Naive thymus-derived CD4-positive, alpha-beta T cell (primary cell): ENCODE measurements at regions of chr14 and their contacts with region 1.

Region 1: DNA sequence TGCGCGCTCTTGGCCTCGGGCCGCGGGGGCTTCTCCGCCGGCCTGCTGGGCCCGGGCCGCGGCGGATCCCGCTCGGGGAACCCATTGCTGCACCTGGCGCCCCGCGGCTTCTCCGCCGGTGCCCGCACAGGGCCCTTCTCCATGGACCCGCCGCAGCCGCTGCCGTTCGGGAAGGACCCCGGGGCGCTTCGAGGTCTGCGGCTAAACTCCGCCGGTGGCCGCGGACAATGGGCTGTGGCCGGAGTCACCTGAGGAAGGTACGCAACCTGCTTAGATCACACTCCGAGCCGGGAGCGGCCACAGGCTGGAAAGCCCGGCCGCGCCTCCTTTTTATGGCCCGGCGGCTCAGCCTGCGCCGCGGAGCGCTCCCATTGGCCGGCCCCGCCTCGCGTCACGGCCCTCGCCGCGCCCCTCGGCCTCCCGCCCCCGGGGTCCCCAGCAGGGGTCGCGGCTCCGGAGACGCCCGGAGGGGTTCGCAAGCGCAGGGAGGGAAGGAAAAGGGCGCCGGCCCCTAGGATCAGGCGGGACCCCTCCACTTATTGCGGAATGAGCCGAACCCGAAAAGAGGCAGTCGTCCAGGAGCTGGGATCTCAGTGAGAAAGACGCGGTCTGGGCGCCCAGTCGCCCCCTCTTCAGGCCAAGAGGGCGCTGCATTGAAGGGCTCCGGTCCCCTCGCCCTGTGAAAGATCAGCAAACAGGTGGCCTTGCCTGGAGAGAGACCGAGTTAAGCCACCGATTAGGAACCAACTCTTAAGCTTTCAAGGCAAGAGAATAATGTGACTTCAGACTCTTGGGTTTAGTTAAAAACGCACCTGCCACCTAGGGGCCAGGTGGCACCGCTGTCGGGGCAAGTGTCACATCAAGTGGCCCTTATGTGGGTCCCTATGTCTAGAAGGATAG is at the start of gene GCH1:
- DNase-seq: peak; percentile 63 to 85 (median 71)
- ATAC-seq: peak; percentile 88
- H3K4me3 ChIP-seq: peak within 1 kb of the TSS; percentile 99
- H3K4me3 Mint-ChIP-seq: peak within 1 kb of the TSS; percentile 82 to 94 (median 90)
- H3K27ac ChIP-seq: peak within 1 kb of the TSS; percentile 88
- H3K27ac Mint-ChIP-seq: peak within 1 kb of the TSS; percentile 66 to 95 (median 91)
- H3K4me1 ChIP-seq: peaks cover under 1 to 9% of the 10 kb centered on the region in 2 donors
- H3K4me1 Mint-ChIP-seq: peaks cover 15 to 43% (median 31%) of the 10 kb centered on the region in 7 donors
- H3K27me3 ChIP-seq: no peaks in the 10 kb centered on the region
- H3K27me3 Mint-ChIP-seq: no peaks in the 10 kb centered on the region
- total RNA-seq, gene GCH1: 21.4 to 64.1 (median 23.2) TPM

Region 2: GRCh38 chr14:54440873-54441868 is 461.6 kb before region 1 on chr14 and contains the start of gene CNIH1:
- CTCF ChIA-PET with region 1: no interaction called
- POLR2A ChIA-PET with region 1: interaction called, 3 read pairs
- intact Hi-C with region 1: loop called (anchors 1 kb)
- DNase-seq: peak; percentile 85 to 99 (median 93)
- ATAC-seq: peak; percentile 97
- H3K4me3 ChIP-seq: peak within 1 kb of the TSS; percentile 73
- H3K4me3 Mint-ChIP-seq: peak within 1 kb of the TSS; percentile 85 to 97 (median 94)
- H3K27ac ChIP-seq: peak within 1 kb of the TSS; percentile 80
- H3K27ac Mint-ChIP-seq: peak within 1 kb of the TSS; percentile 87 to 98 (median 95)
- H3K4me1 ChIP-seq: peaks cover 9 to 23% of the 10 kb centered on the region in 2 donors
- H3K4me1 Mint-ChIP-seq: peaks cover 23 to 54% (median 49%) of the 10 kb centered on the region in 7 donors
- H3K27me3 ChIP-seq: no peaks in the 10 kb centered on the region
- H3K27me3 Mint-ChIP-seq: peaks cover 0 to 2% (median 0%) of the 10 kb centered on the region in 5 donors
- total RNA-seq, gene CNIH1: 50.5 to 87.9 (median 57.8) TPM

Region 3: GRCh38 chr14:54509546-54510501 is 392.9 kb before region 1 on chr14 and contains the start of gene CGRRF1:
- CTCF ChIA-PET with region 1: no interaction called
- POLR2A ChIA-PET with region 1: no interaction called
- intact Hi-C with region 1: loop called (anchors 1 to 5 kb)
- DNase-seq: peak; percentile 86 to 98 (median 89)
- ATAC-seq: peak; percentile 99
- H3K4me3 ChIP-seq: peak within 1 kb of the TSS; percentile 93
- H3K4me3 Mint-ChIP-seq: peak within 1 kb of the TSS; percentile 87 to 99 (median 96)
- H3K27ac ChIP-seq: peak within 1 kb of the TSS; percentile 72
- H3K27ac Mint-ChIP-seq: peak within 1 kb of the TSS; percentile 85 to 93 (median 89)
- H3K4me1 ChIP-seq: peaks cover 11% of the 10 kb centered on the region in 2 donors
- H3K4me1 Mint-ChIP-seq: peaks cover 20 to 56% (median 53%) of the 10 kb centered on the region in 7 donors
- H3K27me3 ChIP-seq: no peaks in the 10 kb centered on the region
- H3K27me3 Mint-ChIP-seq: peaks cover 0 to 10% (median 0%) of the 10 kb centered on the region in 5 donors
- total RNA-seq, gene CGRRF1: 11.2 to 24.1 (median 17.3) TPM

Region 4: GRCh38 chr14:54572316-54572715 is 330.5 kb before region 1 on chr14:
- CTCF ChIA-PET with region 1: no interaction called
- POLR2A ChIA-PET with region 1: no interaction called
- intact Hi-C with region 1: no loop called
- DNase-seq: no peak
- ATAC-seq: no peak
- H3K4me3 ChIP-seq: no peak overlapping the region
- H3K4me3 Mint-ChIP-seq: no peak overlapping the region
- H3K27ac ChIP-seq: no peak overlapping the region
- H3K27ac Mint-ChIP-seq: no peak overlapping the region
- H3K4me1 ChIP-seq: peaks cover 0 to 3% of the 10 kb centered on the region in 2 donors
- H3K4me1 Mint-ChIP-seq: peaks cover 2 to 11% (median 4%) of the 10 kb centered on the region in 7 donors
- H3K27me3 ChIP-seq: peaks cover 0 to 12% of the 10 kb centered on the region in 2 donors
- H3K27me3 Mint-ChIP-seq: peaks cover 15 to 34% (median 28%) of the 10 kb centered on the region in 5 donors

Region 5: GRCh38 chr14:54814076-54814475 is 88.7 kb before region 1 on chr14:
- CTCF ChIA-PET with region 1: no interaction called
- POLR2A ChIA-PET with region 1: no interaction called
- intact Hi-C with region 1: no loop called
- DNase-seq: no peak
- ATAC-seq: peak; percentile 32
- H3K4me3 ChIP-seq: no peak overlapping the region
- H3K4me3 Mint-ChIP-seq: no peak overlapping the region
- H3K27ac ChIP-seq: no peak overlapping the region
- H3K27ac Mint-ChIP-seq: no peak overlapping the region
- H3K4me1 ChIP-seq: no peaks in the 10 kb centered on the region
- H3K4me1 Mint-ChIP-seq: no peaks in the 10 kb centered on the region
- H3K27me3 ChIP-seq: no peaks in the 10 kb centered on the region
- H3K27me3 Mint-ChIP-seq: peaks cover 3 to 7% (median 5%) of the 10 kb centered on the region in 5 donors

Region 6: DNA sequence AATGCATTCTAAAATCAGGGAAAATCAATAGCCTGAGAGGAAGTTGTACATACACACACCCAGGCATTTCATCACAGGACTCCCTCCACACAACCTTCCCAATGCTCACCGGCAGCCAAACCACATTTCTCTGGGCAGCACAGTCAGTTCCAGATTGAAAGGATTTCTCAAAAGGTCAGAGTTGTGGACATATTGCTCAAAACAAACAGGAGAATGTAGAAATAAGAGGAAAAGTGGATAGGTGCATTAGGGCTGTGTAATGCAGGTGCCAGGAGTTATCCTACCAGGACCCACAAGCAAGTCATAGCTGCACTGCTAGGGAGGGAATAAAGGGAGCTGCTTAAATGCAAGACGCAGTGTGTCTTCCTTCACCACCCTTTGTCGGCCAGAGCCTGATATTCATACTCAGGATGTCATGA is 63.1 kb before region 1 on chr14:
- CTCF ChIA-PET with region 1: no interaction called
- POLR2A ChIA-PET with region 1: no interaction called
- intact Hi-C with region 1: loop called in 1 of 2 experiments (anchors 2 kb)
- DNase-seq: no peak
- ATAC-seq: no peak
- H3K4me3 ChIP-seq: no peak overlapping the region
- H3K4me3 Mint-ChIP-seq: no peak overlapping the region
- H3K27ac ChIP-seq: no peak overlapping the region
- H3K27ac Mint-ChIP-seq: peak overlapping the region in 2 of 9 donors; percentile 33 to 44
- H3K4me1 ChIP-seq: no peaks in the 10 kb centered on the region
- H3K4me1 Mint-ChIP-seq: peaks cover 0 to 1% (median 0%) of the 10 kb centered on the region in 7 donors
- H3K27me3 ChIP-seq: no peaks in the 10 kb centered on the region
- H3K27me3 Mint-ChIP-seq: no peaks in the 10 kb centered on the region

Region 7: DNA sequence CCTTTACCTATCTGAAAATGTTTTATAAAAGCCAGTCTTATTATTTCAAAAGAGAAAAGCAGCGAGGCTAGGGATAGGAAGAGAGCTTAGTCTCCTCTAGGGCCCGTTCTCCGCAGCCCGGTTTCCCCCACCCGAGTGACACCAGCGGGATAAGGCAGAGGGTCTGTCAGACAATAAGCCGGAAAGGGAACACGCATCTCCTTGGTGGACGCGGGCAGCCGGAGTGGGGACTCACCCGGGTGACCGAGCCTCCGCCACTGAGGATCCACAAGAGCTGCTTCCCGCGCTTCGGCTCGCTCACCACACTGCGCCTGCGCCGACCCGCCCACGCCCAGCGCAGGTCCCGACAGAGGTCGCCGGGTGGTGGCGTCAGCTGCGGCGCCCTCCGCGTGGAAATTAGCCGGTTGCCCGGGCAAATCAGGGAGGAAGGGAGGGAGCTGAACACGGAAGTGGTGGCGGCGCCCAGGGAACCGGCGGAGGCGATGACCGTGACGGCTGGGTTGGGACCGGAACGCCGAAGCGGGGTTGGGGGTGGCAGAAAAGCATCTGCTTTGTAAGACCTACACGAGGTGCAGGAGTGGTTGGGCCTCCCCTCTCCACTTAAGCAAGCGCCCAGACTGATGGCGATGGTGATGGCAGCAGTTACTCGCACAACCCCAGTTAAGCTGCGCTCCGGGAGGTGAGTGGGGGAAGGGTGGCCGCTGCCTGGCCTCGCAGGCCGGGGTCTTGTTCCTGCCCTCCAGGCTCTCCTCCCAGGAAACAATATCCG is 124.2 kb after region 1 on chr14 and contains the starts of genes SOCS4 and WDHD1:
- CTCF ChIA-PET with region 1: no interaction called
- POLR2A ChIA-PET with region 1: interaction called, 4 read pairs
- intact Hi-C with region 1: loop called (anchors 1 kb)
- DNase-seq: peak; percentile 93 to 100 (median 96)
- ATAC-seq: peak; percentile 97
- H3K4me3 ChIP-seq: peak within 1 kb of the TSS; percentile 87
- H3K4me3 Mint-ChIP-seq: peak within 1 kb of the TSS; percentile 84 to 96 (median 93)
- H3K27ac ChIP-seq: peak within 1 kb of the TSS; percentile 86
- H3K27ac Mint-ChIP-seq: peak within 1 kb of the TSS; percentile 68 to 96 (median 92)
- H3K4me1 ChIP-seq: peaks cover 12 to 31% of the 10 kb centered on the region in 2 donors
- H3K4me1 Mint-ChIP-seq: peaks cover 26 to 59% (median 53%) of the 10 kb centered on the region in 7 donors
- H3K27me3 ChIP-seq: no peaks in the 10 kb centered on the region
- H3K27me3 Mint-ChIP-seq: no peaks in the 10 kb centered on the region
- total RNA-seq, gene SOCS4: 21.2 to 30.3 (median 22.1) TPM
- total RNA-seq, gene WDHD1: 2.6 to 26.6 (median 3.6) TPM

Region 8: DNA sequence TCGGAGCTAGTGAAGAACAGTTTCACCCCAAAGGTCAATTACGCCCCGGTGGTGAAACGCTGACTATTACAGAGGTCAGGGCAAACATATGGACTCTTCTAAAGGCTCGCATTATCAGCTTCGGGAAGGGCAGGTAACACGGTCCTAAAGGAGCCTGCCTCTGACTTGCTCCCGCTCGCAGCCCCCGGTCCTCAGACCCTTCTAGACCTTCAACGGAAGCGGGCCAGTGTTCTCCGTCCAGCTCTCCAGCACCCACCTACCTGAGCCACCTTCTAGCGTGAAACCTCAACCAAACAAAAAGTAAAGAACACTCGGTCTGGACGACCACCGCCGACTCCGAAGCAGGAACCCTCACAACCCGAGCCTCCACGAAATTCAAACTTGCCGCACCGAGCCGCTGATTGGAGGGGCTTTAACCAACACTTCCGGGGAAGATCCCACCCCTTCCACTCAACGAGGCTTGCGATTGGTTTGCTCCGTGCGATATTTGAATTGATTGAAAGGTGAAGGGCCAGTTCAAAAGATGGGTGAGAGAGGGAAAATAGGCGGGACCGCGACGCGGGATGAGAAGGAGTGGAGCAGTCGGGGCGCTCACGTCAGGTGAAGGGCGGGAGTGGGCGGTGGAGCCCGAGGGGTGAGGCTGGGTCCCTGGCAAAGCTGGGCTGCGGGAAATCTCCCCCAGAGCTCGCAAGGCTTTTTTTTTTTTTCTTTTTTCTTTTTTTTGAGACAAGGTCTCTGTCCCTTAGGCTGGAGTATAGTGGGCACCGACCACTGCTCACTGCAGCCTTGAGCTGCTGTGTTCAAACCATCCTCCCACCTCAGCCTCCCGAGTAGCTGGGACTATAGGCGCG is 288.7 kb after region 1 on chr14 and contains the start of gene DLGAP5:
- CTCF ChIA-PET with region 1: no interaction called
- POLR2A ChIA-PET with region 1: no interaction called
- intact Hi-C with region 1: loop called (anchors 10 kb)
- DNase-seq: peak; percentile 59 to 90 (median 86)
- ATAC-seq: peak; percentile 98
- H3K4me3 ChIP-seq: peak within 1 kb of the TSS; percentile 84
- H3K4me3 Mint-ChIP-seq: peak within 1 kb of the TSS; percentile 88 to 97 (median 90)
- H3K27ac ChIP-seq: peak within 1 kb of the TSS; percentile 58
- H3K27ac Mint-ChIP-seq: peak within 1 kb of the TSS; percentile 46 to 92 (median 68)
- H3K4me1 ChIP-seq: peaks cover 7 to 10% of the 10 kb centered on the region in 2 donors
- H3K4me1 Mint-ChIP-seq: peaks cover 5 to 42% (median 18%) of the 10 kb centered on the region in 7 donors
- H3K27me3 ChIP-seq: no peaks in the 10 kb centered on the region
- H3K27me3 Mint-ChIP-seq: peaks cover 0 to 4% (median 0%) of the 10 kb centered on the region in 5 donors
- total RNA-seq, gene DLGAP5: 0.49 to 46.7 TPM in 2 of 5 experiments, not detected in the others

Region 9: DNA sequence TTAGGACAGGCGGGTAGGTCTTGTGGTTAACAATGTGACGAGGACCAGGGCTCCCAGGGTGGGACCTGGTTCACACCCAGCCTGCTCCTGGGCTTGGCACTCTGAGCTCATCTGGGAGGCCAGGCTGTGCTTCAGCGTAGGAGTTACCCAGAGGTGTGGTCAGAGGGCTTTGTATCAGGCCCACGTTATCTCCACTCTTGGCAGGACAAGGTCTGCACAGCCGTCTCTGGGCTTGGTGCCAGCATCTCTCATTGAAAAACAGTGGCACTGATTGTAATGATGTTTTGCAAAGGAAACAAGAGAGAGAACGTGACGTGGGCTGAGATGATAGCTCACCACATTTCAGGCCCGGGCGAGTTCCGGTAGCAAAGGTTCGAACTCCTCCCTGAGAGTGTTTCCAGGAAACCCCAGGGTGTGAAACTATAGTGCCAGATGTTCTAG is 904.3 kb after region 1 on chr14:
- CTCF ChIA-PET with region 1: no interaction called
- POLR2A ChIA-PET with region 1: no interaction called
- intact Hi-C with region 1: loop called in 1 of 2 experiments (anchors 10 kb)
- DNase-seq: peak; percentile 46 to 91 (median 82)
- ATAC-seq: peak; percentile 91
- H3K4me3 ChIP-seq: peak overlapping the region; percentile 23
- H3K4me3 Mint-ChIP-seq: peak overlapping the region; percentile 31 to 70 (median 54)
- H3K27ac ChIP-seq: peak overlapping the region; percentile 61
- H3K27ac Mint-ChIP-seq: peak overlapping the region; percentile 90 to 98 (median 91)
- H3K4me1 ChIP-seq: peaks cover 16 to 17% of the 10 kb centered on the region in 2 donors
- H3K4me1 Mint-ChIP-seq: peaks cover 25 to 64% (median 36%) of the 10 kb centered on the region in 7 donors
- H3K27me3 ChIP-seq: no peaks in the 10 kb centered on the region
- H3K27me3 Mint-ChIP-seq: no peaks in the 10 kb centered on the region